ENCODE measurements at regions of chr5 and their contacts with region 1.

Region 1: DNA sequence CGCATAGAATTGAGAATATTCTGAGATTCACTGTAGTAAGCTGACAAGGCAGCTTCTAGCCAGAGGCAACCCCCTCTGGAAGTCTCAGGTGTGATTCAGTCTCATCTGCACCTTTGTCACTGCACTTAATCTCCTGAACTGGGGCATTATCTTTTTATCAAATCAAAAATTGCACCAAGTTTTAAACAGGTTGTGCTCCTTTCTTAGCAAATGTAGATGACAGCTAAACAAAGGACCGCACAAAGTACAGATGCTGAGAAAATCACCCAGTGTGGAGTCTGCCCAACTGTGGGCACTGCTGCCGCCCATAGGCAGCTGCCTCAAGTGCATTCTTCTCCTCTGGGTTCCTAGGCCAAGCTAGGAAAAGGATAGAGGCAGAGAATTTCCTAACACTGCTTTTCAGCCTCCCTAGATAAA is 51.1 kb downstream of the STARD4 start:
- DNase-seq: peak; percentile 53
- H3K4me3 ChIP-seq: no peak overlapping the region
- H3K27ac ChIP-seq: peak overlapping the region in 1 of 2 experiments; percentile 81; a peak in 2 of 4 replicates
- H3K4me1 ChIP-seq: peaks cover 0 to 6% of the 10 kb centered on the region in 2 experiments; a peak in 2 of 4 replicates
- H3K27me3 ChIP-seq: no peaks in the 10 kb centered on the region
- CTCF ChIP-seq: peak; percentile 55
- EP300 ChIP-seq: no peak
- RAD21 ChIP-seq: peak; percentile 84

Region 2: GRCh38 chr5:111099058-111099778 is 362.0 kb before region 1 on chr5:
- CTCF ChIA-PET with region 1: no interaction called
- POLR2A ChIA-PET with region 1: no interaction called
- DNase-seq: no peak
- H3K4me3 ChIP-seq: no peak overlapping the region
- H3K27ac ChIP-seq: no peak overlapping the region
- H3K4me1 ChIP-seq: peaks cover 1 to 2% of the 10 kb centered on the region in 2 experiments; a peak in 3 of 4 replicates
- H3K27me3 ChIP-seq: no peaks in the 10 kb centered on the region
- CTCF ChIP-seq: no peak
- EP300 ChIP-seq: no peak
- RAD21 ChIP-seq: no peak

Region 3: DNA sequence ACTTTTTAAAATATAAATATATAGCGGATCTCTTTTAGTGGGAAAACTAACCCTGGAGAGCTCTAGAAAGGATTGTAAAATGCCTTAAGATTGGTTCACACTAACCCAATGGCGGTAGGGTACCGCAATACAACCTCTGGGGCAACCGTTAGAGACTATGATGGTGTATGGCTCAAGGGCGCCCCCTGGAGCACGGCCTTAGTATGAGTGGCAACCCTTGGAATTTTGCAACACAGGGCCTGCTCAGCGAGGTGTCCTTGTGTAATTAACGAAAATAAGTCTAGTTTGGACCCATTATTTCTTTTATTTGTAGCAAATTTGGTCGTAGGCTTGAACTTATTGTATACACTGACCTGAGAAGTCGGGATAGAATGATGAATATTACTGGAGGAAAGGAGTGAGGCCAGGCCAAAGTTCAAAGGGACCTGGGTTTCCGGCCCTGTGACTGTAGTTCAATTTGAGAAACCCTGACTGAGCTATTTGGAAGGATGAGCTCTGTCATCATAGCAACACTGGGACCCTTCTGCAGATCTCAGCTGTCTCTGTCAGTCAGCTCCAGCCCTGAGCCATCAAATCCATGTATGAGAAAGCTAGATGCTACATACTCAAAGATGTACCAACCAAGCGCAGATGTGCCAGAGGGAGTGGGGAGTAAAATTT is 182.3 kb before region 1 on chr5:
- CTCF ChIA-PET with region 1: interaction called, 10 read pairs
- POLR2A ChIA-PET with region 1: no interaction called
- DNase-seq: peak; percentile 42
- H3K4me3 ChIP-seq: no peak overlapping the region; a peak in 1 of 4 replicates
- H3K27ac ChIP-seq: peak overlapping the region in 1 of 2 experiments; percentile 43; a peak in 1 of 4 replicates
- H3K4me1 ChIP-seq: peaks cover 0 to 20% of the 10 kb centered on the region in 2 experiments; a peak in 2 of 4 replicates
- H3K27me3 ChIP-seq: no peaks in the 10 kb centered on the region
- CTCF ChIP-seq: peak; percentile 76
- EP300 ChIP-seq: no peak
- RAD21 ChIP-seq: peak; percentile 71

Region 4: DNA sequence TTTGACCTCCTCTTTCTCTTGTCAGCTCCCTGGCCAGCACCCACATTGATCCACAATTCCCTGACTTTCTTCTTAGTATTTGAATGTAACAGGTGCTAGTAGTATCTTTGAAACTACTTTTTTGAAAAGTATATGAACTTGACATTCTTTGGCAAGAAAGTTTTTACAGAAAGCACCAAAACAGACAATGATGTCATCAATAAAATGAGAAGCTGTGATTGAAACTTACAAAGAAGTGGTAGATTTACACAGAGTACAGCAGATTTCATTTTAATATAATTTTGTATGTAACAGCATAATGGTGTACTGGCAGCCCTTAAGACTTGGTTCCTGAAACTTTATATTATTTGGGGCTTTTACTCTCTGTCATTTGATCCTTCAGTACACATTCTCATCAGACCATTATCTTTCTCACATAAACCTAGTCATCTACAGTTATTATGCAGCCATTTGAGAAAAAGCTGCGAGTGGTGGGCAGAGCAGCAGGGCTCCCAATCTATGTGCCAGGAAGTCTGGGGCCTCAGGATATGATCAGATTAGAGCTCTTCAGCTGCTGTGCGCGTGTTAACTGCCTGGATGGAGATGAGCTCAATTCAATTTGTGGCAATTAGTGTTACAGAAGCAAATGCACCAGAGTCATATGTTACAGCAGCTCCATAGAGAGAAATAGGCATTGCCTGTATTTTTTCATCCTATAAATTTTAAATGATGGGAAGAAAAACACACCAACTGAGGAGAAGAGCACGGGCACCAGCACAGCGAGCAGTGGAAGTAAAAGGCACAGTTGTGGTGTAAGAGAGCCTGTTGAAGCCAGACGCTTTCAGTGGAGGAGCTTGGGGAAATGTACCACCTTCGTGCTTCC is 75.1 kb before region 1 on chr5:
- CTCF ChIA-PET with region 1: interaction called, 25 read pairs
- POLR2A ChIA-PET with region 1: interaction called, 9 read pairs
- DNase-seq: peak; percentile 60
- H3K4me3 ChIP-seq: no peak overlapping the region
- H3K27ac ChIP-seq: peak overlapping the region; percentile 40 to 100
- H3K4me1 ChIP-seq: peaks cover 18 to 49% of the 10 kb centered on the region in 2 experiments; a peak in 3 of 4 replicates
- H3K27me3 ChIP-seq: no peaks in the 10 kb centered on the region
- CTCF ChIP-seq: no peak
- EP300 ChIP-seq: peak in 1 of 2 experiments; percentile 99; a peak in 2 of 4 replicates
- RAD21 ChIP-seq: peak; percentile 39

Region 5: GRCh38 chr5:111407562-111407961 is 53.7 kb before region 1 on chr5:
- CTCF ChIA-PET with region 1: no interaction called
- POLR2A ChIA-PET with region 1: no interaction called
- DNase-seq: no peak
- H3K4me3 ChIP-seq: no peak overlapping the region
- H3K27ac ChIP-seq: no peak overlapping the region; a peak in 1 of 4 replicates
- H3K4me1 ChIP-seq: peaks cover 0 to 6% of the 10 kb centered on the region in 2 experiments; a peak in 3 of 4 replicates
- H3K27me3 ChIP-seq: no peaks in the 10 kb centered on the region
- CTCF ChIP-seq: no peak
- EP300 ChIP-seq: no peak
- RAD21 ChIP-seq: no peak

Region 6: DNA sequence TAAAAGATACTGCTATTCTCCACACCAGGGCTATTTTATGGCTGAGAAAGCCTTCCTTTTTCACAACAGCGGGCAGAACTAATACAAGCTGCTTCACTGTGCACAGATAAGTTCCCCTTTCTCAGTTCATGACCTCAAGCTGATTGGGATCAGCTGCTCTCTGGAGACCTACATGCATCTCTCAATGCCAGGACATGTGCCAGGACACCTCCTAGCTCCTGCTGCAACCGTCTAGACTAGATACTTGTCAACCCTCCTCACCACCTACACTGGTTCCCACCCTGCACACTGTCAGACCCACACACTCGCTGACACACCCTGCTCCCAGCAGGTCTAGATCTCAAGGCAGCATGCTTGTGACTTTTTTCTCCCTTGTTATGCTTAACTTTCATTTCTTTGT is 11.3 kb after region 1 on chr5:
- CTCF ChIA-PET with region 1: interaction called, 23 read pairs
- POLR2A ChIA-PET with region 1: interaction called, 3 read pairs
- DNase-seq: peak; percentile 37
- H3K4me3 ChIP-seq: no peak overlapping the region
- H3K27ac ChIP-seq: peak overlapping the region in 1 of 2 experiments; percentile 91; a peak in 2 of 4 replicates
- H3K4me1 ChIP-seq: peaks cover 0 to 21% of the 10 kb centered on the region in 2 experiments; a peak in 2 of 4 replicates
- H3K27me3 ChIP-seq: no peaks in the 10 kb centered on the region
- CTCF ChIP-seq: no peak
- EP300 ChIP-seq: peak in 1 of 2 experiments; percentile 75; a peak in 2 of 4 replicates
- RAD21 ChIP-seq: peak; percentile 29; the same call in 1 of the 2 replicates

Region 7: DNA sequence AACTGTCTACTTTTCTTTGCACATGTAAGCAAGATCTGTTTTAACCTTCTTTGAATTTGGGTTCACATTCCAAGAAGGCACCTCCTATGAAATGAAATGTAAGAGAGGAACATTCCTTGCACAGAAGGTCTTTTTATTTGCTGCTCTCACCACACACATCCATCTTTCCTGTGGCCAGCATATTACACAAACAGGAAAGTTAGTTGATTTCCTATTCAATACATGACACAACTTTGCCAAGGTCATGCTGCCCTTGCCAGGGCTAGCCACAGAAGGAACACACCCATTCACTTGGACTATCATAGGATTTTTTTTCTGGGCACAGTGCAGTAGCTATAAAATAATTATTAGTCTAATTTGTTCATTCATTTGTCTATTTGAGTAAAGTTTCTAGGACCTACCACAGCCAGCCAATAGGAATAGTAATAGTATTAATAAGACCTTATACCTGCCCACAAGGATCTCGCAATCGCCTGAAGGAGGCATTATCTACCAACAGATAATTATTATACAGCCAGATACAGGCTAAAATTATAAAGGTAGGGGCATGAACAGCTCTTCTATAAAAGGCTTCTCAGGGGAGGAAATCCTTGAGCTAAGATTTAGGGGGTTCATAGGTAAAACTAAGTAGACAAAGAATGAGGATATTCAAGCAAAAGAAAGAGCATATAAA is 373.8 kb after region 1 on chr5:
- CTCF ChIA-PET with region 1: no interaction called
- POLR2A ChIA-PET with region 1: no interaction called
- DNase-seq: no peak
- H3K4me3 ChIP-seq: no peak overlapping the region
- H3K27ac ChIP-seq: no peak overlapping the region
- H3K4me1 ChIP-seq: no peaks in the 10 kb centered on the region
- H3K27me3 ChIP-seq: no peaks in the 10 kb centered on the region
- CTCF ChIP-seq: peak; percentile 36
- EP300 ChIP-seq: no peak
- RAD21 ChIP-seq: no peak; the same call in 1 of the 2 replicates

Region 8: DNA sequence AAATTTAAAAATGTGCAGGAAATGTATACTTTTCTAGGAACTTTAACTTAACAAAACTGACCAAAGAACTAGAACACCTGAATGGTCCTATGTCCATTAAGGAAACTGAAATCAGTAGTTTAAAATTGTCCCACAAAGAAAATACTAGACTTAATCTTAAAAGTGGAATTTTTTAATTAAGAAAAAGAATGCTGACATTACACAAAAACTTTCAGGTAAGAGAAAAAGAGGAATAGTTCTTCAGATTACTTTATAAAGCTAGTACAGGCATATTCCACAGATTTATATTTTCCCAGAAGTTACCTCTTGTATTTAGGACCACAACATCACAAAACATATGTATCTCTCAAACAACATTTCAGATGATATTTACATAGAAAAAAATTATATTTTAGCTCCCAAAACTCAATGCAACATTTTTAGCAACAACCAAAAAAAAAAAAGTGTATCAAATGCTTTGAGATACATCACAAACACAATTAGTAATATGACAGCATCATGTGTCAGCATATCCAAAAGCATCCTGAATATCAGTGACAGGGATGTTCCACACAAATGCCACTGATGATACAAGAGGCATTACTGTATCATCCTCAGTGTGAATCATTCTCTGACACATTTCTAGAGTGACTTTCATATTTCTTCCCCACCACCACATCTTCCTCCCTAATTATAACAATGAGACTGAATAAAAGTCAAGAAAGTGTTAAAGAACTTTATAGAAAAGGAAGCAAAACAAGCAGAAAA is 693.9 kb after region 1 on chr5:
- CTCF ChIA-PET with region 1: no interaction called
- POLR2A ChIA-PET with region 1: no interaction called
- DNase-seq: no peak
- H3K4me3 ChIP-seq: no peak overlapping the region
- H3K27ac ChIP-seq: no peak overlapping the region; a peak in 1 of 4 replicates
- H3K4me1 ChIP-seq: peaks cover 0 to under 1% of the 10 kb centered on the region in 2 experiments; a peak in 1 of 4 replicates
- H3K27me3 ChIP-seq: no peaks in the 10 kb centered on the region
- CTCF ChIP-seq: no peak
- EP300 ChIP-seq: no peak
- RAD21 ChIP-seq: no peak